Ovary (tissue), 10 donors: ENCODE measurements at regions of chr12 and their contacts with region 1.

Region 1: DNA sequence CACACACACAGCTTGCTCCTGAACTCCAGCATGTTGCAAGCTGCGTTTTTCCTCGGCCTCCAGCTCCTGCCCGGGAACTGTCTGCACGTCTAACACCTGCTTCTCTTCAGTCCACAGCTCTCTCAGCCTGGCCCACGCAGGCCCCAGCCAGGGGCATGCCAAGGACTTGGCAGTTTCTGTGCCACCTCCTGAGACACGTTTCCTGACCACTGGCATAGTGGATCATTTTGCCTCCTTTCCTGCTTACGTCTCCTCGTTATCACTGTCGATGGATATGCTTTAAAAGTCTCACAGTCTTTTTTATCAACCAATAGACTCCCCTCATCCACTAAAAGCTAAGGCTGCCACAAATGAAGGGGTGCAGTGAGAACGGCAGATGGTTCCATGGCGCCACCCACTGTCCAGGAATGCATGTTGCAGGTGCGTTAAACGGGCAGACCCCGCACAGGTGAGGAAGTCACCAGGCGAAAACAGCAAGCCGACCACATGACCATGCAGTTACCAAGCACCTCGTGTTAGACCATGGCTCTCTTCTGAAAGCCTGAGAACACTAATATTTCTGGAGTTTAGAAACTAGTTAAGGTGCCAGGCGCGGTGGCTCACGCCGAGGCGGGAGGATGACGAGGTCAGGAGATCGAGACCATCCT is 14.7 kb upstream of the TEAD4 start:
- DNase-seq: peak; percentile 62 to 79 (median 72)
- H3K4me3 ChIP-seq: no peak overlapping the region
- H3K27ac ChIP-seq: no peak overlapping the region
- H3K4me1 ChIP-seq: no peaks in the 10 kb centered on the region
- H3K27me3 ChIP-seq: no peaks in the 10 kb centered on the region
- CTCF ChIP-seq: peak; percentile 56 to 82 (median 79)
- EP300 ChIP-seq: no peak
- POLR2A ChIP-seq: no peak

Region 2: GRCh38 chr12:2845280-2845679 is 99.2 kb before region 1 on chr12:
- intact Hi-C with region 1: loop called in 3 of 4 experiments (anchors 5 to 10 kb)
- DNase-seq: peak; percentile 49 to 75 (median 70)
- H3K4me3 ChIP-seq: no peak overlapping the region
- H3K27ac ChIP-seq: peak overlapping the region in 1 of 2 donors; percentile 11
- H3K4me1 ChIP-seq: peaks cover 12% of the 10 kb centered on the region
- H3K27me3 ChIP-seq: no peaks in the 10 kb centered on the region
- CTCF ChIP-seq: no peak
- EP300 ChIP-seq: no peak
- POLR2A ChIP-seq: no peak

Region 3: GRCh38 chr12:2853626-2854025 is 90.9 kb before region 1 on chr12:
- intact Hi-C with region 1: loop called (anchors 5 to 10 kb)
- DNase-seq: peak; percentile 88 to 94 (median 91)
- H3K4me3 ChIP-seq: no peak overlapping the region
- H3K27ac ChIP-seq: no peak overlapping the region
- H3K4me1 ChIP-seq: peaks cover 11% of the 10 kb centered on the region
- H3K27me3 ChIP-seq: no peaks in the 10 kb centered on the region
- CTCF ChIP-seq: peak; percentile 66 to 72 (median 69)
- EP300 ChIP-seq: no peak
- POLR2A ChIP-seq: no peak